HepG2 (cell line): ENCODE measurements at regions of chr10 and their contacts with region 1.

Region 1: GRCh38 chr10:117610321-117610720 is 67.8 kb downstream of the EMX2 start:
- DNase-seq: no peak
- ATAC-seq: no peak; the same call in 2 of the 3 replicates
- H3K4me3 ChIP-seq: no peak overlapping the region
- H3K27ac ChIP-seq: no peak overlapping the region
- H3K4me1 ChIP-seq: no peaks in the 10 kb centered on the region
- H3K27me3 ChIP-seq: peaks cover 0 to 13% of the 10 kb centered on the region in 2 experiments; a peak in 1 of 5 replicates
- CTCF ChIP-seq: no peak
- EP300 ChIP-seq: no peak
- POLR2A ChIP-seq: no peak
- RAD21 ChIP-seq: no peak

Region 2: DNA sequence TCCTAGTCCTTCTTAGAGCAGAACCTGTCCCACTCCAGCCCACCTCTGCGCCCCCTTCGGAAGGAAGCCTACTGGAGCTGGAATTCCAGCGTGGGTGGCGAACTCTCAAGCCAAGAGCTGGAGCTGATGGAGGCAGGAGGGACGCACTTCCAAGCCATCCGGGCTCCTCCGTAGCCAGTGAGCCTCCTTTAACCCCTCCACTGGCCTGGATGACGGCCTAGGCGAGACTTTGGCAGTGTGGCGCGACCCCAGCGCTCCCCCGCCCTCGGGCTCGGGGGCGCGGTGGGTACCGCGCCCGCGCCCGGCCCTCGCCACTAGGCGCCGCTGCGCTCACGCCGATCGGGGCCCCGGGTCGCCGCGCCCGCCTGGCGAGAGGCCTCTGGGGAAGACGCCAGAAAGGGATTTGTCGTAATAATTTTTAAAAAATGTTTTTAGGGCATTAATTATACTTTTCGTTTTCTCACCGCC is 72.9 kb before region 1 on chr10:
- CTCF ChIA-PET with region 1: no interaction called
- POLR2A ChIA-PET with region 1: no interaction called
- in situ Hi-C with region 1: no loop called
- intact Hi-C with region 1: no loop called
- DNase-seq: no peak
- ATAC-seq: peak; percentile 78
- H3K4me3 ChIP-seq: peak overlapping the region in 1 of 3 experiments; percentile 50; a peak in 1 of 6 replicates
- H3K27ac ChIP-seq: no peak overlapping the region
- H3K4me1 ChIP-seq: 0 out of 2 replicates have a peak, but pooled peaks cover 17% of the 10 kb centered on the region
- H3K27me3 ChIP-seq: peaks cover 14 to 93% of the 10 kb centered on the region in 2 experiments
- CTCF ChIP-seq: peak; percentile 63; the same call in 1 of the 2 replicates
- EP300 ChIP-seq: no peak
- POLR2A ChIP-seq: no peak
- RAD21 ChIP-seq: peak; percentile 79

Region 3: DNA sequence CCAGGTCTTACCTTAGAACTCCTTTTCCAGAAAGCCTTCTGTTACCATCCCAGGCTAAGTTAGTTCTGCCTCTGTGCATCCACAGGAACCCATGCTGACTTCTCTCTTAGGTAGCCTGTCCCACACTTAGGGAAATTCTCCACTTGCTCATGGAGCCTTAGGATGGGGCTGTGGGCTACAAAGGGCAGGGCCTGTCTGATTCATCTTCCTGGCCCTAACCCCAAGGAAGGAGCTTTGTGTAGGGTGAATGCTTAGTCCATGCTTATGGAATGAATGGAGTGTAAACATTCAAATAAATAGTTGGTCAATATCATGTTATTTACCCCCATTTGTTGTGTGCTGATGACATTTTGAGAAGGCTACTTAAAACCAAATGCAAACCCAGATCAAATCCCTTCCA is 13.1 kb before region 1 on chr10:
- CTCF ChIA-PET with region 1: no interaction called
- POLR2A ChIA-PET with region 1: no interaction called
- in situ Hi-C with region 1: no loop called
- intact Hi-C with region 1: no loop called
- DNase-seq: no peak
- ATAC-seq: no peak
- H3K4me3 ChIP-seq: no peak overlapping the region
- H3K27ac ChIP-seq: no peak overlapping the region
- H3K4me1 ChIP-seq: no peaks in the 10 kb centered on the region
- H3K27me3 ChIP-seq: peaks cover 3 to 12% of the 10 kb centered on the region in 2 experiments; a peak in 3 of 5 replicates
- CTCF ChIP-seq: no peak
- EP300 ChIP-seq: no peak
- POLR2A ChIP-seq: no peak
- RAD21 ChIP-seq: no peak

Region 4: DNA sequence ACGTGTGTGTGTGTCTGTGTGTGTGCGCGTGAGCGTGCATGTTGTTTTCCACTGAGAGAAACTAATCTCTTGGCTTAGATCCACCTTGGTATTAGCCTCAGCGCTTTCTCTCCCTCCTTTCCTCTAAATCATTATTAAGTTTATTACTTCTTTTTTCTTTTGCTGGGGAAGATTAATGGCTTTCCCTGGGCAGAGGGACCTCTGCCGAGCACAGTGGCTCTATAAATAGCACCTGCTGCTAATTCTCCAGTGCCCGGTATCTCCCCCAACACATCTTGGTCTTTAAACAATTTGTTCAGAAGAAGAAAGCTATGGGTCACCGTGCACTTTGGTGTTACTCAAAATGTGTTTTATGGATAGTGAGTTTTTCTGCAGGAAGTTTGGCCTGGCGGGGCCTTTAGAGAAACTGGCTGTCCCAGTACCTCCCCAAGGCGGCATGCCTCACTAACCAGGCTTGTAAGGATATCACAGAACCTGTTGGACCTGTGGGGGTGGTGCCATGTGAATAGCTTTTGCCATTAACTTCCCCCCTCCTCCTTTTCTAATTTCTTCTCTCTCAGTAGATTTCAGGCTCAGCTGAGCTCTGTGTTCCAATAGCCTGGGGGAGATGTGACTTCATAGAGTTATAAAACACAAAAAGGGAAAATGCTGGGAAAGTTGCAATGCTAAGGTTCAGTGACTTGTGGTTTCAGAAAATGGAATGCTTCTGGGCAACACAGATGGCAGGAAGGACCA is 506.6 kb after region 1 on chr10:
- CTCF ChIA-PET with region 1: no interaction called
- POLR2A ChIA-PET with region 1: no interaction called
- in situ Hi-C with region 1: no loop called
- intact Hi-C with region 1: loop called (anchors 5 kb)
- DNase-seq: no peak
- ATAC-seq: no peak
- H3K4me3 ChIP-seq: no peak overlapping the region
- H3K27ac ChIP-seq: no peak overlapping the region
- H3K4me1 ChIP-seq: no peaks in the 10 kb centered on the region
- H3K27me3 ChIP-seq: no peaks in the 10 kb centered on the region
- CTCF ChIP-seq: no peak
- EP300 ChIP-seq: no peak
- POLR2A ChIP-seq: no peak
- RAD21 ChIP-seq: no peak